Motor neuron (in vitro differentiated cells): ENCODE measurements at regions of chr1 and their contacts with region 1.

Region 1: DNA sequence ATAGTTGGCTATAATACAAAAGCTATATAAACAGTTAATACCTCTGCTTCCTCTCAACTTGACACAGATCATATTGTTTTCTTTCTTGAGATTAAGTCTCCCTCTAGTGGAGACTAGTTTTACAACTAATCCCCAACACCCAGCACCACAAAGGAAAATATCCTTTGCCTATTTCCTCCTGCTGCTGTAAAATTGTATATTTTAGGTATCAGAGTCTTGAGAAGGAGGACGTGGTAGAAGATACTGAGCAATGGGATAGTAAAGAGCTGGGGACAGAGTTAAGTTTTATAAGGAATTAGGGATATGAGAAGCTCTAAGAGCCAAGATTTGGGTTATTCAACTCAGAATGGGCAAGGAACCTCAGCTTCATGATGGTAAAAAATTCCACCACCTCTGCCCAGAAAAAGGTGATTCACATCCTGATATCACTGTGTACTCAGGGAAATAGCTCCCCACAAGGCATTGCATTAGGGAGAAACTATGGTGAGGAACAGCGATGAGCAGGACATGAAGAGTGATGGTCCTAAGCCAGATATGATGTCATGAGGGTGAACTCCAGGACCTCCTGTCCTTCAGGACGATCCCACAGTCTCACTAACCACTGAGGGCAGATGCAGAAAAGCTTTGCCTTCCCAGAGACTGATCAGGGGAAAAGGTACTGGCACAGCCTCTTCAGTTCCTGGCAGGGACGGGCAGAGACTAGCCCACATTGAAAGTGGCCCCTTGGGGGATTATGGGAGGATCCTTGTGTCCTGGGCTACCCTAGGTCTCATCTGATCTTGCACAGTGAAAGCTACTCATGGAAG is 14.7 kb upstream of the CFAP126 start:
- ATAC-seq: peak; percentile 72 to 92 (median 85)
- H3K4me3 ChIP-seq: no peak overlapping the region
- H3K27ac ChIP-seq: no peak overlapping the region
- H3K4me1 ChIP-seq: peaks cover 4 to 6% of the 10 kb centered on the region in 2 donors

Region 2: DNA sequence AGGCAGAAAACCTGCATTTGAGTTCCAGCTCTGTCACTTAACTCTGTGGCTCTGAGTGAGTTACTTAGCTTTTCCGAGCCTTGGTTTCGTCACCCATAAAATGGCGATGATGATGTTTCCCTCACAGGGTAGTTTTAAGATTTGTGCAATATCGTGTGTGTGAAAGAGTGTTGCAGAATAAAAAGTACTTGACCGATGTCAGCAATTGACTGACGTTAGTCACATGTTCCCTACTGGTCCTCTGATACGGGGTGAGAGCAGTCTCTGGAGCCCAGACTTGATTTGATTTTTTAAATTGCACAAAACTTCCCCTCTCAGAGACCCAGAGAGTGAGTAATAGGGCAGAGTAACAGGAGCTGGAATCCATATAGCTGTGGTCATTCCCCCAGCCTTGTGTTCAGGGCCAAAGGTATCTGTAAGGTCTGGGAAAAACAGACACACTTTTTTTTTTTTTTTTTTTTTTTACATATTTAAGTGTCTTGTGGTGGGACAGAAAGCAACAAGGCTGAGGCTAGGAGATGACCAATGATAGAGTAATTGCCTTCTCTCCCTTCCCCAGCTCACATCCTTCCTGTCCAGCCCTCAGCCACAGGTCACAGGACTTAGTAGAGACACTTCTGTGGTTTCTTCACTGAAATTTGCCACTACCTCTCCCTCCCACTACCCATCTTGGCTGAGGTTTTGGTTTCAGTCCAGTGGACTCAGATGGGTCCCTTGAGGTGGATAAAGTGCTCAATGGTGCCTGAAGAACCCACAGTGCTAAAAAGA is 165.3 kb before region 1 on chr1:
- in situ Hi-C with region 1: loop called in 7 of 9 experiments (anchors 5 to 25 kb)
- ATAC-seq: peak in 5 of 8 experiments; percentile 17 to 59 (median 39)
- H3K4me3 ChIP-seq: no peak overlapping the region
- H3K27ac ChIP-seq: no peak overlapping the region
- H3K4me1 ChIP-seq: no peaks in the 10 kb centered on the region

Region 3: GRCh38 chr1:161287482-161288054 is 94.8 kb before region 1 on chr1:
- in situ Hi-C with region 1: no loop called
- ATAC-seq: no peak
- H3K4me3 ChIP-seq: no peak overlapping the region
- H3K27ac ChIP-seq: no peak overlapping the region
- H3K4me1 ChIP-seq: no peaks in the 10 kb centered on the region